Right lobe of liver (tissue), 6 donors: ENCODE measurements at regions of chr19 and their contacts with region 1.

Region 1: DNA sequence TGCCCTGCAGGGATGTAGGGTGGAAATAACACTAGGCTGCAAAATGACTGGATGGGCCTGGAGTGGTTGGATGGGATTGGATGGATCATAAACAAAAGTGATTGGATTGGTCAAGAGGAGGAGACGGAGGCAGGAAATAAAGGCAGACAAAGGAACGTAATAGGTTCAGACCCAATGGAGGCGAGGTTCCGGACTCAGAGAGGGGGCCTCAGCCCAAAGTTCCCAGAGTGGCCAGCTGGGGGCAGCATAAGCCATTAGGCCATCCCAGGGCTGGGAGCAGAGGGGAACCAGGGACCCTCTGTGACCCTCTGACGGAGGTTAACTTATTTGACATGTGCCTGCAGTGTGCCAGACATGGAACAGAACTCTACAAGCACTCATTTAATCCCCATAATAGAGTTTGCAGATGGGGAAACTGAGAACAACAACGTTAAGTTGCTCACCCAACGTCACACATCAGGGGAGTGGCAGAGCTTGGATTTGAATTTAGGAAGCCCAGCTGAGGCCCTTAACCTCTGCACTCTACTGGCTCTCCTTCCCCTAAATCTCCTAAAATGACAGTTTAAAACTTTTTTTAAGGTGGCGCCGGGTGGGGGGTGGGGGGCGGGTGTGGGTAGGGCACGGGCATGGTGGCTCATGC is 15.3 kb upstream of the MAP1S start:
- DNase-seq: peak in 1 of 3 donors; percentile 58
- ATAC-seq: peak; percentile 79 to 87 (median 83)
- H3K4me3 ChIP-seq: no peak overlapping the region
- H3K27ac ChIP-seq: no peak overlapping the region
- H3K4me1 ChIP-seq: no peaks in the 10 kb centered on the region
- H3K27me3 ChIP-seq: no peaks in the 10 kb centered on the region
- CTCF ChIP-seq: peak; percentile 66 to 81 (median 72)
- POLR2A ChIP-seq: no peak

Region 2: GRCh38 chr19:17784201-17785008 is 80.5 kb after region 1 on chr19:
- intact Hi-C with region 1: loop called in 1 of 2 experiments (anchors 10 kb)
- DNase-seq: peak in 2 of 3 donors; percentile 57 to 58
- ATAC-seq: peak; percentile 49 to 82 (median 73)
- H3K4me3 ChIP-seq: no peak overlapping the region
- H3K27ac ChIP-seq: no peak overlapping the region
- H3K4me1 ChIP-seq: no peaks in the 10 kb centered on the region
- H3K27me3 ChIP-seq: no peaks in the 10 kb centered on the region
- CTCF ChIP-seq: peak; percentile 60 to 87 (median 69)
- POLR2A ChIP-seq: no peak